WTC11 (cell line): ENCODE measurements at regions of chr10 and their contacts with region 1.

Region 1: GRCh38 chr10:30783939-30784500 is 154.5 kb upstream of the LYZL2 start:
- DNase-seq: peak; percentile 92
- ATAC-seq: peak; percentile 49
- H3K4me3 Mint-ChIP-seq: peak overlapping the region; percentile 77
- H3K27ac Mint-ChIP-seq: peak overlapping the region; percentile 84
- H3K4me1 Mint-ChIP-seq: peaks cover 14% of the 10 kb centered on the region
- H3K27me3 Mint-ChIP-seq: peaks cover 34% of the 10 kb centered on the region
- CTCF ChIP-seq: peak; percentile 63

Region 2: GRCh38 chr10:30687698-30688219 is 96.3 kb before region 1 on chr10:
- CTCF ChIA-PET with region 1: interaction called, 26 read pairs
- POLR2A ChIA-PET with region 1: no interaction called
- DNase-seq: peak; percentile 92
- ATAC-seq: peak; percentile 98
- H3K4me3 Mint-ChIP-seq: no peak overlapping the region
- H3K27ac Mint-ChIP-seq: no peak overlapping the region
- H3K4me1 Mint-ChIP-seq: peaks cover 32% of the 10 kb centered on the region
- H3K27me3 Mint-ChIP-seq: no peaks in the 10 kb centered on the region
- CTCF ChIP-seq: peak; percentile 77

Region 3: DNA sequence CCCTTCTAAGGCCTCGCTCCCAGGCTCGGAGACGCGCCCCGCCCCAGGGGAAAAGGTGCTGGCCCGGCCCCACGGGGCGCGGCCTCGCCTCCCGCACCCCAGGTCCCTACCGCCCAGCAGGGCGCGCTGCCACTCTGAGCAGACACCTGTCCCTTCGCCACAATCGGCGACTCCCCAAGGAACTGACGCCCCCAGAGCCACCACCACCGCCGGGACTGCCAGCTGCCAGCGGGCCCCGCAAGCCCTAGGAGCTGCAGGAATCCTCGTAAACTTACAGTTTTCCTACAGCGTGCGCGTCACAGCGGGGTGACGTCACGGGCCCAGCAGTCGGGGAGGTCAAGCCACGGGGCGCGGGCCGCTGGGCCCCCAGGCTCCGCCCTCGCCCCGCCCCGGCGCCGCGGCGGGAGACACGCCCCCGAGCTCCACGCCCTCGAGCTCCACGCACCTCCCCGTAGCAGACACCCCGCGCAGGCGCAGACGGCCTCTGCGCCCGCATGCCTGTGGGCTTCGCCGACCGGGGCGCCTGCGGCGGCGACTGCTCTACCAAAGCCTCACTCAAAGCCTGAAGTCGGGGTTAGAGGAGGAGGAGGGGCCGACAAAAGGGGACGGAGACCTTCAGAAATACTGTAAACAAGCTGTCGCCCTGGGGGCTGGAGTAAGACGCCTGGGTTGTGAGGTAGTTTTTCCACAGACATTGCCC is 247.7 kb after region 1 on chr10 and contains the start of gene ZNF438:
- CTCF ChIA-PET with region 1: interaction called, 26 read pairs
- POLR2A ChIA-PET with region 1: interaction called, 10 read pairs
- DNase-seq: peak; percentile 88
- ATAC-seq: peak; percentile 68
- H3K4me3 Mint-ChIP-seq: peak within 1 kb of the TSS; percentile 72
- H3K27ac Mint-ChIP-seq: peak within 1 kb of the TSS; percentile 94
- H3K4me1 Mint-ChIP-seq: peaks cover 53% of the 10 kb centered on the region
- H3K27me3 Mint-ChIP-seq: peaks cover 39% of the 10 kb centered on the region
- CTCF ChIP-seq: no peak
- total RNA-seq, gene ZNF438: 1.6 to 1.9 TPM (median 1.6 TPM) in 3 replicates

Region 4: DNA sequence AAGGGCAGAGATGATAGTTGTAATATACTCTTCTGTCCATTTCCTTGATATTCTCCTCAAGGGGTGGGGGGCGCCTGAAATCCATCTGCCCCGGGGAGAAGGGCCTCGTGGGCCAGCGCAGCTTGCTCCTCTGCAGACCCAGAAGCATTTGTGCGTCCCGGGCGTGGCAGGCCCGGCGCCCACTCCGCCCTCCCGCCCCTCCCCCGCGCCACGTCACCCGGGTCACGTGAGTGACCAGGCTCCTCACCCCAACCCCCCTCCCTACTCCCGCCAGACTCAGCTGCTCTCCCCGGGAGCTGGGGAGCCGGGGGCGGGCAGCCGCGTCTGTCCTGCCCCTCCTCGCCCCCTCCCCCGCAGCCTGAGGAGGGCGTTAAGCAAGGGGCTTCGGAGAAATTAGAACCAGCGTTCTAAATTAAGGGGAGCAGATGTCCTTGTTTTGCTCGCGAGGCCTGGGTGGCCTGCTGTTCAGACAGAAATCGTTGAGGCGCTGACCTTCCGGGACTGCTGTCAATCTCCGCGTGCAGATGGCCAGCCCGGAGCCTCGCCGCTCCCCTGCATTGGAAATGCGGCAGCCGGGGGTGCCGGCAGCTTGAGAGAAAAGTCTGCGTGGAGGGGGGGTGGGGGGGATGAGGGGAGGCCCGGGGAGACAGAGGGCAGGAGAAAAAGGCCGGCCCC is 349.7 kb after region 1 on chr10:
- CTCF ChIA-PET with region 1: interaction called, 3 read pairs
- POLR2A ChIA-PET with region 1: interaction called, 12 read pairs
- DNase-seq: peak; percentile 57
- ATAC-seq: peak; percentile 60
- H3K4me3 Mint-ChIP-seq: peak overlapping the region; percentile 56
- H3K27ac Mint-ChIP-seq: no peak overlapping the region
- H3K4me1 Mint-ChIP-seq: peaks cover 32% of the 10 kb centered on the region
- H3K27me3 Mint-ChIP-seq: peaks cover 9% of the 10 kb centered on the region; the same call in 1 of the 2 replicates
- CTCF ChIP-seq: no peak

Region 5: GRCh38 chr10:31467796-31468535 is 683.9 kb after region 1 on chr10:
- CTCF ChIA-PET with region 1: interaction called, 30 read pairs
- POLR2A ChIA-PET with region 1: no interaction called
- DNase-seq: peak; percentile 61
- ATAC-seq: peak; percentile 100
- H3K4me3 Mint-ChIP-seq: no peak overlapping the region
- H3K27ac Mint-ChIP-seq: no peak overlapping the region
- H3K4me1 Mint-ChIP-seq: peaks cover 8% of the 10 kb centered on the region
- H3K27me3 Mint-ChIP-seq: no peaks in the 10 kb centered on the region; the same call in 1 of the 2 replicates
- CTCF ChIP-seq: peak; percentile 77